Pancreas (tissue), 10 donors: ENCODE measurements at regions of chr7 and their contacts with region 1.

Region 1: GRCh38 chr7:100483101-100483721 is 516 bp upstream of the NYAP1 start:
- DNase-seq: peak in 5 of 6 donors; percentile 59 to 93 (median 78)
- ATAC-seq: peak; percentile 57 to 73 (median 71)
- H3K4me3 ChIP-seq: peak overlapping the region; percentile 49 to 55 (median 50)
- H3K27ac ChIP-seq: peak overlapping the region in 1 of 4 donors; percentile 22
- H3K4me1 ChIP-seq: peaks cover 0 to 8% (median 7%) of the 10 kb centered on the region in 3 donors
- H3K27me3 ChIP-seq: no peaks in the 10 kb centered on the region
- CTCF ChIP-seq: peak; percentile 89 to 98 (median 93)

Region 2: DNA sequence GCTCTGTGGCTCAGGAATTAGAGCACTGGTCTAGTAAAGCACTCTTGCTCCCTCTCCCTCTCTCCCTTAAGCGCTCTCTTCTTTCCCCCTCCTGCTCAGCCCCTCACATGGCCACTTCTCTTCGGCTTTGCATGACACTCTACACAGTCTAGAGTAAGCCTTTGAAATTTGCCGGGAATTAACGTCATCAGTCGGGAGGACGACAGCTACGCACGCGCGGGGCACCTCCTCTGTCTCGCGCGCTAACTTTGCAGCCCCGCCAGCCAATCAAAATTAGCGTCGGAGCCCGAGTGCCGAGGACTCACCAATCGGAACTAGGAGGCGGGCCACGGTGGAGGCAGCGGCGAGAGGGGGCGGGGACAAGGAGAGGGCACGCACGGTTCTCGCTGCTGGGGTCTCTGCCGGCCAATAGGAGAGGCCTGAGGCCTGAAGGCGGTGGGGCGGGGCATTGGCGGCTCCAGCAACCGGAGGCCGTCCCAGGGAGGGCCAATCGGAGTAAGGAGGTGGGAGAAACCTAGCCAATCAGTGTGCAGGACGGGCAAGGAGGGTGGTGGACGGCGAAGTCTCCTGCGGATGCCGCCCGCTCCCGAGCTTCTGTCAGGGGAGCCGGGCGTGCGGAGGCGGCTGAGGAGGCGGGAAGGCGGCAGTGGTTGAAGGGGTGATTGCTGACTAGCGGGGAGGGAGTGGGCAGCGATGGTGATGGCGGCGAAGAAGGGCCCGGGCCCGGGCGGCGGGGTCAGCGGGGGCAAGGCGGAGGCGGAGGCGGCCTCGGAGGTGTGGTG is 55.6 kb after region 1 on chr7 and contains the start of gene AGFG2:
- intact Hi-C with region 1: loop called in 1 of 3 experiments (anchors 10 kb)
- DNase-seq: peak; percentile 99 to 100 (median 100)
- ATAC-seq: peak; percentile 93 to 97 (median 94)
- H3K4me3 ChIP-seq: peak within 1 kb of the TSS; percentile 66 to 76 (median 74)
- H3K27ac ChIP-seq: peak within 1 kb of the TSS; percentile 77 to 90 (median 87)
- H3K4me1 ChIP-seq: peaks cover 23 to 28% (median 23%) of the 10 kb centered on the region in 3 donors
- H3K27me3 ChIP-seq: no peaks in the 10 kb centered on the region
- CTCF ChIP-seq: no peak
- total RNA-seq, gene AGFG2: 13.6 to 33.1 (median 21.4) TPM